AG04449 (cell line): ENCODE measurements at regions of chr19 and their contacts with region 1.

Region 1: GRCh38 chr19:14472202-14472938 is 2.8 kb downstream of the PTGER1 start:
- DNase-seq: no peak
- H3K4me3 ChIP-seq: no peak overlapping the region
- CTCF ChIP-seq: peak; percentile 96

Region 2: DNA sequence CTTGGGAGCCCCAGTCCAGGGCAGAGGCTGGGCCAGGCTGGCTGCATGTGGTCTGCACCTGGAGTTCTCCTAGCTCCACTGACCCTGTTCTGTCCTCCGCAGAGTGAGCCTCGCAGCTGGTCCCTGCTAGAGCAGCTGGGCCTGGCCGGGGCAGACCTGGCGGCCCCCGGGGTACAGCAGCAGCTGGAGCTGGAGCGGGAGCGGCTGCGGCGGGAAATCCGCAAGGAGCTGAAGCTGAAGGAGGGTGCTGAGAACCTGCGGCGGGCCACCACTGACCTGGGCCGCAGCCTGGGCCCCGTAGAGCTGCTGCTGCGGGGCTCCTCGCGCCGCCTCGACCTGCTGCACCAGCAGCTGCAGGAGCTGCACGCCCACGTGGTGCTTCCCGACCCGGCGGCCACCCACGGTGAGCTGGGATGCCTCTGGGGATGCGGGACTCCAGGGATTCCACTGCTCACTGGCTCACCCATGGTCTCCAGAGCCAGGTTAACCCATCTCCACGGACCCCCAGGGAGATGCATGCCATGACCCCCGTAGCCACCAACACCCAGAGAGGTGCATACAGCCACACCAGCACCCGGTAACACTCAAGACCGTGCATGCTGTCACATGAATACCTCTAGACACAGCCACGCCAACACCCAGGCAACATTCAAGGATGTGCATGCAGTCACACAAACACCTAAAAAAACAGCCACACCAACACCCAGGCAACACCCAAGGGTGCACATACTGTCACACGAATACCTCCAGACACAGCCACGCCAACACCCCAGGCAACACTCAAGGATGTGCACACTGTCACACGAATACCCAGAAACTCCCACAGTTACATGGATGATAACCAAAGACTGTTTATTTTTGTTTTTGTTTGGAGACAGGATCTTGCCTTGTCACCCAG is 31.1 kb before region 1 on chr19:
- CTCF ChIA-PET with region 1: interaction called, 10 read pairs
- POLR2A ChIA-PET with region 1: no interaction called
- DNase-seq: no peak
- H3K4me3 ChIP-seq: no peak overlapping the region
- CTCF ChIP-seq: no peak

Region 3: GRCh38 chr19:14450168-14450874 is 22.0 kb before region 1 on chr19:
- CTCF ChIA-PET with region 1: interaction called, 12 read pairs
- POLR2A ChIA-PET with region 1: no interaction called
- DNase-seq: no peak
- H3K4me3 ChIP-seq: no peak overlapping the region
- CTCF ChIP-seq: no peak

Region 4: GRCh38 chr19:14459703-14460102 is 12.7 kb before region 1 on chr19:
- CTCF ChIA-PET with region 1: interaction called, 17 read pairs
- POLR2A ChIA-PET with region 1: no interaction called
- DNase-seq: no peak
- H3K4me3 ChIP-seq: no peak overlapping the region
- CTCF ChIP-seq: no peak